MCF 10A (cell line): ENCODE measurements at regions of chr6 and their contacts with region 1.

Region 1: DNA sequence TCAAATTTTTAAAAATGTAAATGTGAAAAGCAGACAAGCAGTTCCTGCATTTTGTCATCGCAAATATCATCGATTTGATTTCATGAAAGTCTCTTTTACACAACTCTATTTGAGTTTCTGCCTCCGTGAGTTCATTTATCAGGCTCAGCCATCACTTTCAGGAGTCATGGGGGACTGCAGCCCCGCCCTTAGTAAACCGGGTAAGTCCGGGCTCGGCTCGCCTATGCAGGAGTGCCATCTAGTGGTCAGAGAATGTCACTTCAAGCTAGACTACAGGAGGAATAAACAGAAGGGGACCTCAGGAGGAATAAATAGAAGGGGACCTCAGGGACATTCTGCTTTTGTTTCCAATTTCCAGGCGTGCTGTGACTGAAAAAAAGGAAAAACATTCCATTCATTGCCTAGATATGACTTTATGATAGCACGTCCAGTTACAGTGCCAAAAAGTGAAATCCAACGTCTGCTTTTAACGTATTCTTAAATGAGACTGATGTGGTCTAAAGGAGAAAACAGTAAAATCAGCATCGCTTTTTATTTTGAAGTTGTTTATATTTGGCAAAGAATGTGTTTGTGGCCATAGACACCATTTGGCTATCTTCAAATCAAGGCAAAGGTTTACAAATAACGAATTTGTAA is 333.9 kb downstream of the HACE1 start:
- DNase-seq: peak; percentile 86
- H3K4me3 Mint-ChIP-seq: peak overlapping the region; percentile 65
- H3K27ac Mint-ChIP-seq: peak overlapping the region; percentile 65
- H3K4me1 Mint-ChIP-seq: peaks cover 15% of the 10 kb centered on the region
- H3K27me3 Mint-ChIP-seq: no peaks in the 10 kb centered on the region
- CTCF ChIP-seq: peak; percentile 93

Region 2: GRCh38 chr6:104509355-104509754 is 16.4 kb before region 1 on chr6:
- CTCF ChIA-PET with region 1: interaction called, 20 read pairs
- POLR2A ChIA-PET with region 1: no interaction called
- intact Hi-C with region 1: no loop called
- DNase-seq: no peak
- H3K4me3 Mint-ChIP-seq: no peak overlapping the region
- H3K27ac Mint-ChIP-seq: no peak overlapping the region
- H3K4me1 Mint-ChIP-seq: no peaks in the 10 kb centered on the region
- H3K27me3 Mint-ChIP-seq: no peaks in the 10 kb centered on the region
- CTCF ChIP-seq: no peak

Region 3: DNA sequence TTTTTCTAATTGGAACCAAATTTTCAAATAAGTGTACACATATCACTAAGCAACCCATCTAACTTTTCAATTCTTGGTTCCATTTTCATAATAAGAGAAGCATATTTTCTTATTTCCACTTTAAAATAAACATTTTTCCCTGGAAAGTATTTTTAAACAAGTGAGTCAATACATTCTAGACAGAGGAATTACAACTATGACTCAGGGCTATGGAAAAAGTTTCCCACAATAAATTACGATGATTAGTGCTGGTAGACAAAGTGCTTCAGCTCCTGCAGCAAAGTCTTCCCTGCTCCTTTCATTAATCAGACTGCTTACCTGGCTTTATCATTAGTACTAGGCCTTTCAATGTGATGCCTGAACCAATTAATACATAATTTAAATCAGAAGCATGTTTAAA is 11.4 kb after region 1 on chr6:
- CTCF ChIA-PET with region 1: interaction called, 35 read pairs
- POLR2A ChIA-PET with region 1: interaction called, 5 read pairs
- intact Hi-C with region 1: no loop called
- DNase-seq: peak; percentile 57
- H3K4me3 Mint-ChIP-seq: no peak overlapping the region
- H3K27ac Mint-ChIP-seq: no peak overlapping the region
- H3K4me1 Mint-ChIP-seq: peaks cover 37% of the 10 kb centered on the region
- H3K27me3 Mint-ChIP-seq: no peaks in the 10 kb centered on the region
- CTCF ChIP-seq: no peak

Region 4: DNA sequence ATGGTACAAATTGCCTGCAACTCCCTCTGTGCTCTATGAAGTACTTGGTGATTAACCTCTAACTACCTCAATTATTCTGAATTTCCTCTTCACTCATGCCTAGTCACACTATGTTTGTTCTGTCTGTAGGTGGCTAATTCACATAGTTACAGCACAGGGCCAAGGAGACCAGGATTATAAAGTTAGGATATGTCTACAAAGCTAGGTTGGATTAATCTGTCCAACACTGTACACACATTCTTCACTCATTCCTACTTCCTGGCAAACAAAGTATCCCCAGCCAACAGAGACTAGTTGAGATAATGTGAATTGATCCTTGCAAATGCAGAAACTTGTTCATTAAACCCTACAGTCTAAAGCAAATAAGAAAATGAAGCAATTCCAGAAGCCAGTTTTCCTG is 64.1 kb after region 1 on chr6:
- CTCF ChIA-PET with region 1: interaction called, 11 read pairs
- POLR2A ChIA-PET with region 1: no interaction called
- intact Hi-C with region 1: no loop called
- DNase-seq: no peak
- H3K4me3 Mint-ChIP-seq: no peak overlapping the region
- H3K27ac Mint-ChIP-seq: no peak overlapping the region
- H3K4me1 Mint-ChIP-seq: peaks cover 13% of the 10 kb centered on the region
- H3K27me3 Mint-ChIP-seq: no peaks in the 10 kb centered on the region
- CTCF ChIP-seq: no peak

Region 5: DNA sequence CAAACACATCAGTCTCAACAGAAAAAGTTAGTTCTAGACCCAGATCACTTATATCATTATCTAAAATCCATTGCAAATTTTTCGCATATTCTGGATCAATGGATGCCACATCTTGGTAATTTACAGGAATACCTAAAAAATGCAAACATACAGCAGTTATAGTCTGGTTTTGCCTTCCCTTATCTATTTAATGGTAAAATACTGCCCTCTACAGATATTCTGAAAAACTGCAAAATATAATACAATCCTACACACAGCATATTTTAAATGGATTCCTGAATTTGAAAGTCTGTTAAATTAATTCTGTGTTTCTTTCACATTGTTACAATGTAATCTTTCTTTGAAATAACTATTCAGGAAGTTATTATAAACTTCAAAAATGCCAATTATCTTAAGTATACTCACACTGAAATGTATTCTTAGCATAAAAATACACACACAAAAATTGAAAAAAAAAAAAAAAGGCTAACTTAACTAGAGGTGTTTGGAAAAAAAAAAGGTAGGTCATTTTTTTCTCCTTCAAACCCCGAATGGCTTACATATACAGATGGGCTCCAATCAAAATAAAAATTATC is 245.6 kb after region 1 on chr6:
- CTCF ChIA-PET with region 1: interaction called, 16 read pairs
- POLR2A ChIA-PET with region 1: no interaction called
- intact Hi-C with region 1: loop called (anchors 1 kb)
- DNase-seq: peak; percentile 40
- H3K4me3 Mint-ChIP-seq: no peak overlapping the region
- H3K27ac Mint-ChIP-seq: no peak overlapping the region
- H3K4me1 Mint-ChIP-seq: peaks cover 5% of the 10 kb centered on the region
- H3K27me3 Mint-ChIP-seq: no peaks in the 10 kb centered on the region
- CTCF ChIP-seq: peak; percentile 60